Mammary epithelial cell (primary cell): ENCODE measurements at regions of chr5 and their contacts with region 1.

Region 1: DNA sequence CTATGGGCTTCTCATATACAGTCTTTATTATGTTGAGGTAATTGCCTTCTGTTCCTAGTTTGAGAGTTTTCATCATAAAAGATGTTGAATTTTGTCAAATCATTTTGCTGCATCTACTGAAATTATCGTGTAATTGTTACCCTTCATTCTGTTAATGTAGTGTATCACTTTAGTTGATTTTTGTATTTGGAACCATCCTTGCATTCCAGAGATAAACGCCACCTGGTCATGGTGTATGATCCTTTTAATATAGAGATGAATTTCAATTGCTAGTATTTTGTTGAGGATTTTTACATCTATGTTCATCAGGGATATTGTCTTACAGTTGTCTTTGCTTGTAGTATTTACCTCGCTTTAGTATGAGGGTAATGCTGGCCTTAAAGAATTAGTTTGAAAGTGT is 19.3 kb downstream of the MEIKIN start:
- DNase-seq: no peak
- H3K4me3 ChIP-seq: no peak overlapping the region
- H3K27ac ChIP-seq: no peak overlapping the region
- H3K4me1 ChIP-seq: no peaks in the 10 kb centered on the region
- H3K27me3 ChIP-seq: no peaks in the 10 kb centered on the region
- CTCF ChIP-seq: no peak

Region 2: GRCh38 chr5:131959906-131960305 is 33.7 kb after region 1 on chr5:
- CTCF ChIA-PET with region 1: no interaction called
- dilution Hi-C with region 1: loop called (anchors 5 kb)
- in situ Hi-C with region 1: no loop called
- intact Hi-C with region 1: no loop called
- DNase-seq: peak; percentile 17
- H3K4me3 ChIP-seq: no peak overlapping the region
- H3K27ac ChIP-seq: no peak overlapping the region
- H3K4me1 ChIP-seq: no peaks in the 10 kb centered on the region
- H3K27me3 ChIP-seq: no peaks in the 10 kb centered on the region
- CTCF ChIP-seq: no peak